ENCODE measurements at regions of chr6 and their contacts with region 1.

Region 1: DNA sequence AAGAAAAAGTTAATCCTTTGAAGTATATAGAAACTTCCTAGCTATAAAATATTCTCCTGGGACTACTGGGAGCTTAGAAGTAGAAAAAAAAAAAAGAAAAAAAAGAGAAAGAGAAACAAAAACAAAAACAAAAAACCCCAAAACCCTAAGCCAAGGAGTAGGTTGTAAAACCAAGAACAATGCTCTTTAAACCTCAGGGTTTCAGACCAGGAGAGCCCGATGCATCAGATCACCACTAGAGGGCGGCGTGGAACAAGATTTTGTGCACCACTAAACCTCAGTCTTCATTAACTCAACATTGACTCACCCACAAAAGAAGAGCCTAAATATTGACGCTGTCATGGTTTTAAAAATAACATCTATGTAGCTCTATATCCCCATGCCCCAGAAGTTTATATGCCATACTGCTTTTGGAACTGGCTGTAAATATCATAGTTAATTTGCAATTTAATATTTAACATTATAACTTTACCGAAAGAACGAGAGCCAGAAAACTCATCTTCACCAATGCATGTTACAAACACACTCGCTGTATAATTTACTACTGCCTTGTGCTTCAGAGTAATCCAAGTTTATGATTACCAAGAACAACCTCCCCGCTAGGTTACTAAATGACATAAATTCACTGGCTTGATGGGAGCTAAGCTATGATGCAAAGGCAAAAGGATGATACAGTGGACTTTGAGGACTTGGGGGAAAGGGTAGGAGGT is 19.2 kb downstream of the MCUR1 start:
- DNase-seq: peak; percentile 50 to 67
- ATAC-seq: peak; percentile 96 to 97
- H3K4me3 ChIP-seq: no peak overlapping the region
- H3K27ac ChIP-seq: peak overlapping the region in 1 of 4 donors; percentile 11
- H3K4me1 ChIP-seq: peaks cover 0 to 3% of the 10 kb centered on the region in 2 donors
- H3K27me3 ChIP-seq: no peaks in the 10 kb centered on the region
- CTCF ChIP-seq: peak; percentile 70 to 93 (median 81)
- POLR2A ChIP-seq: no peak

Region 2: DNA sequence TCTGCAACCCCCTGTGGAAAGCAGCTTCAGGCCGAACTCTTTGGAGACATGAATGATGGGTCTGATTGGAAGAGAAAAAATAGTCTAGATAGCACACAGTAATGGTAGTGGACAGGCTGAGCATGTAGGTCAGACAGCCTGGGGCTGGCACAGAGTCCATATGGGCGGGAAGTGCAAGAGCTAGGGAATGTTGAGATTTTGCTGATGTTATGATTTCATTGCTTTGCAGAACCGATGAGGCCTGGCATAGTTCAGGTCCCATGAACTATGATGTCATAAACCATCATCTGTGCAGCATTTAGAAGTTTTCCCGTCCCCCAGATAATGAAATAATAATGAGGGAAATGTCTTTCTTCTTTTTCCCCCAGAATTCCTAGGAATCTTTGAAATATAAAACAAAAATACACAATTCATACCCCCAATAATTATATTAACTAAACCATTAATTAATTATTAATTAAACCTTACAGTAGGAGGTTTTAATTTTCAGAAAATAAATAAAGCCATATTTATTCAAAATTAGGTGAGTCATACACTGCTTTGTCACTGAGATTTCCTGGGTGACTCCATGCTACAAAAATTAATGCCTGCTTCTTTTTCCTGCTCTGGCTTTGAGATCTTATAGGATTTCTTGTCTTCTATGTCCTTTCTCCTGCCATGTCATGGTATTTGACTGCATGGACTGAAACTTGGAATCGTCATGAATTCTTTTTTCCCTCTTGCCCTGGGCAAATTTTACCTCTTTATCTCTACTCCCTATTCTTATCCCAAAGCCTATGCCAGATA is 945.6 kb before region 1 on chr6:
- in situ Hi-C with region 1: no loop called
- intact Hi-C with region 1: no loop called
- DNase-seq: no peak
- ATAC-seq: no peak
- H3K4me3 ChIP-seq: no peak overlapping the region
- H3K27ac ChIP-seq: no peak overlapping the region
- H3K4me1 ChIP-seq: no peaks in the 10 kb centered on the region
- H3K27me3 ChIP-seq: no peaks in the 10 kb centered on the region
- CTCF ChIP-seq: no peak
- POLR2A ChIP-seq: no peak

Region 3: GRCh38 chr6:13496513-13497180 is 298.5 kb before region 1 on chr6:
- in situ Hi-C with region 1: no loop called
- intact Hi-C with region 1: no loop called
- DNase-seq: no peak
- ATAC-seq: no peak
- H3K4me3 ChIP-seq: no peak overlapping the region
- H3K27ac ChIP-seq: no peak overlapping the region
- H3K4me1 ChIP-seq: peaks cover 0 to 18% of the 10 kb centered on the region in 2 donors
- H3K27me3 ChIP-seq: no peaks in the 10 kb centered on the region
- CTCF ChIP-seq: no peak
- POLR2A ChIP-seq: no peak

Region 4: DNA sequence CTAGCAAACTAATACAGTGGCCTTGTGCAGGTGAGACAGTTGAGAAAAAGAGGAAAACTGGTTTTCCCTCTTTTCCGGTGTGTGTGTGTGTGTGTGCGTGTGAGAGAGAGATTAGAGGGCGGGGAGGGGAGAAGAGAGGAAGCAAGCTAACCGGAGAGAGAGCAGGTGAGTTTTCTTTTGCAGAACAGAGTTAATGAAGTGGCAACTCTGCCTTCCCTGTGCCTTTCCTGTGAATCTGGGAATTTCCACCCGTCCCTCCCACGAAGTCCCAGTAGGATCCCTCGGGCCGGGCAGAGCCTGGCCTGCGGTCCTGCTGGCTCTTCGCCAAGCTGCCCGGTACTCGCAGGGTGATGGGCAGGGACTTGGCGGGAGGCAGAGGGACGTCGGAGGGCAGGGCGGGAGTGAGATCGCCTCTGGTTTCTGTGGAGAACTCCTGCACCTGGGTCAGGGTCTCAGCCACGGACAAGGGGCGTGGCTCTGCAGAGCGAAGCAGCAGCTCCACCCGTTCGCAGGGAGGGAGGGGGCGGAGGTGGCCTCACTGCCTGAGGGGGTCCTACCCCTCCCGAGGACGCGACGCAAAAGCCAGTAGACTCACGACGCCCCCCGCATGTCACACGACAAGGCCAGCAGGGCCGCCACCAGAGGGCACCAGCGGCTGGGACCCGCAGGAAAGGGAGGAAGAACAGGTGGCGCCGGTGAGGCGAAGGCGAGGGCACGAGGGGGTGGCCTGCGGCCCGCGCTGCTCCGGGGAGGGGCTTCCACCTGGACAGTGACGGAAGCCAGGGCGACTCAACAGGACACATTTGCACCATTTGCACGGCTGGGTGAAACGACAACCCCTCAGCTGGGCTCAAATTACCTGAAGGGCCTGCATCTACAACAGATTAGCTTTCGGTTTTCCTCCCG is 78.3 kb after region 1 on chr6:
- in situ Hi-C with region 1: no loop called
- intact Hi-C with region 1: loop called (anchors 1 kb)
- DNase-seq: peak; percentile 5 to 20
- ATAC-seq: peak in 1 of 2 donors; percentile 55
- H3K4me3 ChIP-seq: peak overlapping the region; percentile 47 to 69 (median 50)
- H3K27ac ChIP-seq: no peak overlapping the region
- H3K4me1 ChIP-seq: peaks cover 0 to 11% of the 10 kb centered on the region in 2 donors
- H3K27me3 ChIP-seq: no peaks in the 10 kb centered on the region
- CTCF ChIP-seq: peak; percentile 23 to 72 (median 53)
- POLR2A ChIP-seq: no peak

Region 5: DNA sequence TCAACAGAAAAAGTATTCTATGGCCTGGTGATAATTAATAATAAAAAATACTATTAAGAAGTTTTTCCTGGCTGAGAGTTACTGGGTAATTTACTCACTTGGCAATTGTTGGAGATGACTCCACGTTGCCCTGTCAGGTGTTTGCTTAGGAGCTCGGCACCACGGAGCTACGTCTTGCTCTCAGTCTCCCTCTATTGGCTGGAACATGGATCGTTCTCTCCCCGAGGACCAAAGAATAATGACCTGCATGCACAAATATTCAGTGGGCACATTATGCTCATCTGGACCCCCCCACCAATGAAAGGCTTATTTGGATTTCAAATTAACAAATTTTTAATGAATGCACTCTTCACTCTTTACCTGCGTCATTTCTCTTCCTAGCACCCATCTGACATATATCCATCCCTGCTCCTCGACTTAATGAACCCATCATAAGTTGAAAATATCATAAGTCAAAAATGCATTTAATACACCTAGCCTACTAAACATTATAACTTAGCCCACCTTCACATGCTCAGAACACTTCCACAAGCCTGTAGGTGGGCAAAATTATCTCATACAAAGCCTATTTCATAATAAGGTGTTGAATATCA is 251.4 kb after region 1 on chr6:
- in situ Hi-C with region 1: loop called in 1 of 4 experiments (anchors 25 kb)
- intact Hi-C with region 1: loop called (anchors 5 kb)
- DNase-seq: no peak
- ATAC-seq: no peak
- H3K4me3 ChIP-seq: no peak overlapping the region
- H3K27ac ChIP-seq: no peak overlapping the region
- H3K4me1 ChIP-seq: no peaks in the 10 kb centered on the region
- H3K27me3 ChIP-seq: peaks cover 0 to 7% (median 3%) of the 10 kb centered on the region in 3 donors
- CTCF ChIP-seq: peak in 2 of 5 experiments; percentile 21 to 32
- POLR2A ChIP-seq: no peak

Region 6: GRCh38 chr6:14059791-14060444 is 264.7 kb after region 1 on chr6:
- in situ Hi-C with region 1: loop called (anchors 5 to 25 kb)
- intact Hi-C with region 1: no loop called
- DNase-seq: peak in 1 of 2 donors; percentile 12
- ATAC-seq: no peak
- H3K4me3 ChIP-seq: no peak overlapping the region
- H3K27ac ChIP-seq: no peak overlapping the region
- H3K4me1 ChIP-seq: no peaks in the 10 kb centered on the region
- H3K27me3 ChIP-seq: peaks cover 0 to 23% (median 10%) of the 10 kb centered on the region in 3 donors
- CTCF ChIP-seq: no peak
- POLR2A ChIP-seq: no peak

Region 7: DNA sequence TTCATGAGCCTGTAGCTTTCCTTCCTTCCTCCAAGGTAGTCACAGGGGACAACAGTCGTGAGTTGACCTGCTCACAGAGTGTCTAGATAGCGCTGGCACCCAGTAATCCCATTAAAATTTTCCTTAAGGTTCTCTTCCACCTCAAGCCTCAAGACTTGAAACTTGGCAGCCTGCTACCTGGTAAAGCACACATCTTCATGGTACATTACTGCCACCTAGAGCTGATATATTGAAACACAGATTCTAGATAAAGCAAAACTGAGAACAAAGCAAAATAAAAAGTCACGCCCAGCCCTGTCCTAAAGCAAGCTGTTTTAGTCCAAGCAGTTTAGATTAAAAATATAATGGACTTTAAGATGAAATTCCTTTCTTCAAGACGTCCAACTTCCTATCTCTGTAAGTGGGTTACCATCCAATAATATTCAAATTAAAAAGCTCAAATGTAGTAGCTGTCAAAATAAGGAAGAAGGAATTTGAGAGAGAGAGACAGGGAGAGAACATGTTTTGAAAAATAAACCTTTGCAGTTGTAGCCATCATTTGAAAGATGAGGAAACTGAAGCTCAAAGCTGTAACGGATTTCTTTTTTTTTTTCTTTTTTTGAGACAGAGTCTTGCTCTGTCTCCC is 271.7 kb after region 1 on chr6:
- in situ Hi-C with region 1: loop called (anchors 5 to 25 kb)
- intact Hi-C with region 1: no loop called
- DNase-seq: no peak
- ATAC-seq: peak; percentile 56 to 78
- H3K4me3 ChIP-seq: no peak overlapping the region
- H3K27ac ChIP-seq: no peak overlapping the region
- H3K4me1 ChIP-seq: no peaks in the 10 kb centered on the region
- H3K27me3 ChIP-seq: peaks cover 0 to 10% (median 4%) of the 10 kb centered on the region in 3 donors
- CTCF ChIP-seq: peak; percentile 54 to 70 (median 62)
- POLR2A ChIP-seq: no peak

Region 8: GRCh38 chr6:14144678-14145113 is 349.5 kb after region 1 on chr6:
- in situ Hi-C with region 1: loop called in 1 of 4 experiments (anchors 10 kb)
- intact Hi-C with region 1: loop called (anchors 10 kb)
- DNase-seq: peak; percentile 24 to 35
- ATAC-seq: peak; percentile 52 to 84
- H3K4me3 ChIP-seq: no peak overlapping the region
- H3K27ac ChIP-seq: no peak overlapping the region
- H3K4me1 ChIP-seq: peaks cover 0 to 8% of the 10 kb centered on the region in 2 donors
- H3K27me3 ChIP-seq: no peaks in the 10 kb centered on the region
- CTCF ChIP-seq: peak; percentile 58 to 92 (median 79)
- POLR2A ChIP-seq: no peak